ENCODE measurements at regions of chr1 and their contacts with region 1.

Region 1: DNA sequence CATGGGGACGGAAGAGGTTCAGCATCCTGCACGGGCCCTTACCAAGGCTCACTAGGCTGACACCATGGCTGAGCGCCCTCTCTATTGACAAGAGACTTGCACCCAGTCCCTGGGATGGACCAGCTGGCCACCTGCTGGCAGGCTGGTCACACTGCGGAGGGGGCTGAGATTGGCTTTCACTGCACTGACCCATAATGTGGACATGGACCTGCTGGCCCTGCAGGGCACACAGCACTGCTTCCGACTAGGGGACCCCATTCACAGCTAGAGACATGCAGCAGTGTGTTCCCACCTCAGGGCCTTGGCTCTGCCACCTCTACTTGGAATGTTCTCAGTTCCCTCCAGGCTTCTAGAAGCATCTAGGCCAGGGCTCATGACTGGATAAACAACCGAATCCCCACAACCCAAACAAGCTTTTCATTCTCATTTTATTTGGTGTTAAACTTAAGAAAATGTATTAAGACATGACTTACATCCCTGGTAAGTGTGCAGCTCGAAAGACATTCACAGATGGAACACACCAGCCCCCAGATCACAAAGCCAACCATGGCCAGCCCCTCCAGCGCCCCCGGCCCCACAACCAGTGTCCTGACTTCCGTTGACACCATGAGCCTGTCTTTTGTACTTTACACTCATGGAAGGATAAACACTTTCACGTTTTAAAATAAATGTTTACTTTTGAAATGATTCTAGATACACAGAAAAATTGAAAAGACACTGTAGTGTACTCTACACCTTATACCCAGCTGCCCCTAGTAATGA is 9.3 kb upstream of the SRARP start:
- DNase-seq: peak; percentile 78 to 87 (median 83)
- ATAC-seq: peak; percentile 84 to 85
- H3K4me3 ChIP-seq: no peak overlapping the region
- H3K27ac ChIP-seq: no peak overlapping the region
- H3K4me1 ChIP-seq: no peaks in the 10 kb centered on the region
- H3K27me3 ChIP-seq: no peaks in the 10 kb centered on the region

Region 2: DNA sequence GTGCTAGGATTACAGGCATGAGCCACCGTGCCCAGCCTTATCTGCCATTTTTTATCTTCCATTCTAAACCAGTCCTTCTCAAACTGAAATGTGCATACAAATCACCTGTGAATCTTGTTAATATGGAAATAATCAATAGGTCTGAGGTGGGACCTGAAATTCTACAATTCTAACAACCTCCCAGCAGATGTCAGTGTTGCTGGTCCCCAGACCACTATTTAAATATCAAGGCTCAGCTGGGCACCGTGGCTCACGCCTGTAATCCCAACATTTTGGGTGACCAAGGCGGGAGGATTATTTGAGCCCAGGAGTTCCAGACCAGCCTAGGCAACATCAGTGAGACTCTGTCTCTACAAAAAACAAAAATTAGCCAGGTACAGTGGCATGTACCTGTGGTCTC is 191.4 kb before region 1 on chr1:
- intact Hi-C with region 1: loop called in 2 of 4 experiments (anchors 5 kb)
- DNase-seq: peak in 1 of 3 donors; percentile 52
- ATAC-seq: no peak
- H3K4me3 ChIP-seq: no peak overlapping the region
- H3K27ac ChIP-seq: no peak overlapping the region
- H3K4me1 ChIP-seq: peaks cover 7% of the 10 kb centered on the region
- H3K27me3 ChIP-seq: no peaks in the 10 kb centered on the region

Region 3: DNA sequence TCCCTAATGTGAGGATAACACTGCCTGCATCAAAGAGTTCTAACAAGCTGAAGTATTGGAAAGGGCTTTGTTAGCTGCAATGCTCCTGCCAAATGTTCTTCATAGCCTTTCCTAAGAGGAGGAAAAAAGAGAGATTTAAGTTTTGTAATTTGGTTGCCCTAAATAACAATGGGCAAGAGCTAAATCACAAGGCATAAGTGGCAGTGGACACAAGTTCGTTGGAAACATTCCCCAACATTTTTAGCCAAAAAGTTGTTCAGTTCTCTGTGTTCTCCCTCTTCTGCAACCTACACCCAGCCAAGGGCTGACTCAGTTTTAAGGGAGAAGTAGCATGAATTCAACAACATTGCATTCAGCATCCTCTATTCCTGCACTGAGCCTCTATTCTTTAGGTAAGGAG is 184.7 kb before region 1 on chr1:
- intact Hi-C with region 1: loop called in 1 of 4 experiments (anchors 10 kb)
- DNase-seq: peak in 1 of 3 donors; percentile 48
- ATAC-seq: peak; percentile 23 to 71
- H3K4me3 ChIP-seq: no peak overlapping the region
- H3K27ac ChIP-seq: peak overlapping the region; percentile 27
- H3K4me1 ChIP-seq: no peaks in the 10 kb centered on the region
- H3K27me3 ChIP-seq: no peaks in the 10 kb centered on the region

Region 4: DNA sequence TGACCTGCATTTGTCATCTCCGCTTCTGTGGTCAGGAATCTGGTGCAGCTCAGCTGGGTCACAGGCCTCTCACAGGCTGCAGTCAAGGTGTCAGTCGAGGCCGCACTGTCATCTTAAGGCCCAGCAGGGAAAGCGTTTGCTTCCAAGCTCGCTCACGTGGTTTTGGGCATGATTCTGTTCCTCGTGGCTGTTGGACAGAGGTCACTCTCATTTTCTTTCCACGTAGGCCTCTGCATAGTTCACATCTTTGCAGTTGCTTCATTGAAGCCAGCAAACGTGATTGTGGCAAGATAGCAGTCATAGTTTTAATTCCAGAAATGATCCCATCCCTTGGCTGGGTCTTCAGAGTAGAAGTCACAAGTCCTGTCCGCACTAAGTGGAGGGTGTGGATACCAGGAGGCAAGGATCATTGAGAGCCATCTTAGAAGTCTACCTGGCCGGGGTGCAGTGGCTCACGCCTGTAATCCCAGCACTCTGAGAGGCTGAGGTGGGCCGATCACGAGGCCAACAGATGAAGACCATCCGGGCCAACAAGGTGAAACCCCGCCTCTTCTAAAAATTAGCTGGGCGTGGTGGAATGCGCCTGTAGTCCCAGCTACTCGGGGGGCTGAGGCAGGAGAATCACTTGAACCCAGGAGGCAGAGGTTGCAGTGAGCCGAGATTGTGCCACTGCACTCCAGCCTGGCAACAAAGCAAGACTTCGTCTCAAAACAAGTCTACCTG is 470.3 kb after region 1 on chr1:
- intact Hi-C with region 1: no loop called
- DNase-seq: no peak
- ATAC-seq: no peak
- H3K4me3 ChIP-seq: no peak overlapping the region
- H3K27ac ChIP-seq: no peak overlapping the region
- H3K4me1 ChIP-seq: no peaks in the 10 kb centered on the region
- H3K27me3 ChIP-seq: no peaks in the 10 kb centered on the region